Activated CD8-positive, alpha-beta T cell treated with anti-CD3 and anti-CD28 coated beads for 36 hours (primary cell): ENCODE measurements at regions of chr9 and their contacts with region 1.

Region 1: GRCh38 chr9:116589392-116590354 is 97.4 kb upstream of the TRIM32 start:
- DNase-seq: peak; percentile 48
- ATAC-seq: peak; percentile 91
- H3K4me3 Mint-ChIP-seq: no peak overlapping the region
- H3K27ac Mint-ChIP-seq: no peak overlapping the region
- H3K4me1 Mint-ChIP-seq: no peaks in the 10 kb centered on the region
- H3K27me3 Mint-ChIP-seq: no peaks in the 10 kb centered on the region
- CTCF ChIP-seq: peak; percentile 59

Region 2: GRCh38 chr9:116661037-116661954 is 71.6 kb after region 1 on chr9:
- CTCF ChIA-PET with region 1: interaction called, 5 read pairs
- POLR2A ChIA-PET with region 1: no interaction called
- intact Hi-C with region 1: loop called (anchors 5 kb)
- DNase-seq: peak; percentile 13
- ATAC-seq: peak; percentile 42
- H3K4me3 Mint-ChIP-seq: no peak overlapping the region
- H3K27ac Mint-ChIP-seq: no peak overlapping the region
- H3K4me1 Mint-ChIP-seq: peaks cover 4% of the 10 kb centered on the region
- H3K27me3 Mint-ChIP-seq: no peaks in the 10 kb centered on the region
- CTCF ChIP-seq: peak; percentile 76

Region 3: GRCh38 chr9:116687074-116687753 is 97.5 kb after region 1 on chr9 and contains the start of gene TRIM32:
- CTCF ChIA-PET with region 1: no interaction called
- POLR2A ChIA-PET with region 1: no interaction called
- intact Hi-C with region 1: no loop called
- DNase-seq: peak; percentile 93
- ATAC-seq: peak; percentile 99
- H3K4me3 Mint-ChIP-seq: peak within 1 kb of the TSS; percentile 88
- H3K27ac Mint-ChIP-seq: peak within 1 kb of the TSS; percentile 89
- H3K4me1 Mint-ChIP-seq: peaks cover 50% of the 10 kb centered on the region
- H3K27me3 Mint-ChIP-seq: no peaks in the 10 kb centered on the region
- CTCF ChIP-seq: no peak
- total RNA-seq, gene TRIM32: 14.6 to 15.0 TPM